A549 (cell line): ENCODE measurements at regions of chr14 and their contacts with region 1.

Region 1: DNA sequence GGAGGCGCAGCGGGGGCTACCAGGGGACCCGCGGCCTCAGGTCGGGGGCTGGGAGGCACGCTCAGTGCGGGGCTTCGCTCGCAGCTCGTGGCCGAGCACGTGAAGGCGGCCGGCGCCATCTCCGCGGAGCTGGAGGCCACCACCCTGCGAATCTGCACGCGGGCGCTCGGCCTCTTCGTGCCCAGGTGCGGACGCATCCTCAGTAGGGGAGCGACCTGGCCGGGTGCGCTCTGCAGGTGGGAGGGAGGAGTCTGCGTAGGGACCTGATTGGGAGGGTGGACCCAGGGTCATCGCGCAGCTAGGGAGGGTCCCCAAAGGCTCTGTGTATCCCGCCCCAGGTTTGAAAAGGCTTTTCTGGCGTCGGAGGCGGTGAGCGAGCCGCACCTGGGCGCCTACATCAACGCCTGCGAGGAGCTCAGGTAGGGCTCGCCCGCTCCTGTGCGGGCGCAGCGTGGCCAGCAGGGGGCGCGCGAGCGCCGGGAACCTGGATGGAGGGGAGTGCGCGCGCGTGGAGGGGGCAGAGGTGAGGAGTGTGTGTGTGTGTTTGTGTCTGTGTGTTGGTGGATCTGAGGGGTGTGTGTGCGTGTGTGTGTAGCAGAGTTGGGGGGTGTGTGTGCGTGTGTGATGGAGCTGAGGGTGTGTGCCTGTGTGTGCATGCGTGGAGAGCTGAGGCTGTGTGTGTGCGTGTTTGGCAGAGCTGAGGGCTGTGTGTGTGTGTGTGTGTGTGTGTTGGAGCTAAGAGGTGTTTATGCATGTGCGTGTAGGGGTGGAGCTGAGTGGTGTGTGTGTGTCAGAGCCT is 10.3 kb downstream of the EXOC3L4 start:
- DNase-seq: peak in 1 of 2 experiments; percentile 81
- ATAC-seq: peak; percentile 37 to 71
- H3K4me3 ChIP-seq: peak overlapping the region; percentile 42
- H3K27ac ChIP-seq: peak overlapping the region; percentile 94
- H3K4me1 ChIP-seq: peaks cover 74% of the 10 kb centered on the region
- CTCF ChIP-seq: peak; percentile 94
- EP300 ChIP-seq: no peak
- POLR2A ChIP-seq: no peak
- RAD21 ChIP-seq: peak; percentile 92 to 98

Region 2: DNA sequence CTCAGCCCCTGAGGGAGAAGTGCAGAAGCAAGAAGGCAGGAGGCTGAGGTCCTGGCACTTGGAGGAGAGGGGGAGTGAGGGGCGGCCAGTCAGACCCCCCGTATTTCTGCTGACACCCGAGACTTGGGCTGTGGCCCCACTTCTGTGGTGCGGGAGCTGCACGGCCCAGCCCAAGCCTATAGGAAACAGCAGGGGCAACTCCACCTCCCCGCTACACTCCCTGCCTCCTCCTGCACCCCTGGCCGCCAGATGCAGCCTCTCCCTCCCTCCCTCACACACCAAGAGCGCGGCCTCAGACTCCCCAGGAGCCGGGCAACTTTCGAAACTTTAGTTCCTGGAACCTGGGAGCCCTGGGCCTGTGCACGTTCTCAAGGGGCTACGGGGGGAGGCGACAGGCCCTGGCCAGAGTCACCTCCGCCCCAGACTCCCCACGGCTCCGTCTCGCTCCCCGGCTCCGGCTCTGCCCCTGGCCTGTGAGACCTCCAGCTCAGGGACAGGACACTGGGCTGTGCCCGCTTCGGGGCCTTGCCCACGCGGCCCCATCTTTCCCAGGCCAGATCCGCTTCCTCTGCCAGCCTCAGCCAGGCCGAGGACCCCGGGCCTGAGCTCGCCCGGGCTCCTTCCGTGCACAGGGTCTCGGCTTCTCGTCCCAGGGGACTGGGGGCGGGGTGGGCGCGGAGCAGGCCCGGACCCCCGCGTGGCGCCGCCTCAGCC is 177.0 kb before region 1 on chr14:
- CTCF ChIA-PET with region 1: no interaction called
- POLR2A ChIA-PET with region 1: no interaction called
- DNase-seq: no peak
- ATAC-seq: peak in 1 of 2 experiments; percentile 3; a peak in 2 of 6 replicates
- H3K4me3 ChIP-seq: no peak overlapping the region
- H3K27ac ChIP-seq: no peak overlapping the region
- H3K4me1 ChIP-seq: peaks cover 4% of the 10 kb centered on the region
- CTCF ChIP-seq: no peak
- EP300 ChIP-seq: no peak
- POLR2A ChIP-seq: no peak
- RAD21 ChIP-seq: no peak

Region 3: DNA sequence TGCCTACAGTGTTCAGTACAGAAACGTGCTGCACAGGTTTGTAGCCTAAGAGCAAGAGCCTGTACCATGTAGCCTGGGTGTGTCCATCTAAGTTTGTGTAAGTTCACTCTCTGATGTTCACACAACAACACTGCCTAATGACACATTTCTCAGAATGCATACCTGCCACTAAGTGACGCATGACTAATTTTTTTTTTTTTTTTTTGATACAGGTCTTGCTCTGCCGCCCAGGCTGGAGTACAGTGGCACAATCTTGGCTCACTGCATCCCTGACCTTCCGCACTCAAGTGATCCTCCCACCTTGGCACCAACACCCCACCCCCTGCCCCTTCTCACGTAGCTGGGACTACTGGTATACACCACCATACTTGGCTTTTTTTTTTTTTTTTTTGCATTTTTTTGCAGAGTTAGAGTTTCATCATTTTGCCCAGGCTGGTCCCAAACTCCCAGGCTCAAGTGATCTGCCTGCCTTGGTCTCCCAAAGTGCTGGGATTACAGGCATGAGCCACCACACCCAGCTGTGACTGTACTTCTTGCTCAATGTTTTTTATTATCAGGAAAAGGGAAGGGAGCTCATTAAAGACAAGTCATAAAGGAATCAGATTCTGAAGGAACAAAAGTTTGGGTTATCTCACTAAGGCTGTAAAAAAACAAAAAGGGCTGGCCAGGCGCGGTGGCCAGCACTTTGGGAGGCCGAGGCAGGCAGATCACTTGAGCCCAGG is 37.5 kb before region 1 on chr14:
- CTCF ChIA-PET with region 1: interaction called, 259 read pairs
- POLR2A ChIA-PET with region 1: no interaction called
- DNase-seq: peak in 1 of 2 experiments; percentile 79
- ATAC-seq: peak; percentile 35 to 49
- H3K4me3 ChIP-seq: no peak overlapping the region
- H3K27ac ChIP-seq: peak overlapping the region; percentile 90 to 97
- H3K4me1 ChIP-seq: peaks cover 72% of the 10 kb centered on the region
- CTCF ChIP-seq: no peak
- EP300 ChIP-seq: peak in 1 of 2 experiments; percentile 20; a peak in 1 of 5 replicates
- POLR2A ChIP-seq: no peak
- RAD21 ChIP-seq: no peak

Region 4: GRCh38 chr14:103121846-103122584 is 17.2 kb after region 1 on chr14:
- CTCF ChIA-PET with region 1: interaction called, 544 read pairs
- POLR2A ChIA-PET with region 1: interaction called, 11 read pairs
- DNase-seq: peak; percentile 83 to 98
- ATAC-seq: peak; percentile 66 to 68
- H3K4me3 ChIP-seq: peak overlapping the region; percentile 83
- H3K27ac ChIP-seq: peak overlapping the region; percentile 96 to 98
- H3K4me1 ChIP-seq: peaks cover 71% of the 10 kb centered on the region
- CTCF ChIP-seq: no peak
- EP300 ChIP-seq: peak; percentile 40 to 78; a peak in 2 of 5 replicates
- POLR2A ChIP-seq: peak; percentile 26
- RAD21 ChIP-seq: peak in 1 of 2 experiments; percentile 48; a peak in 1 of 5 replicates

Region 5: DNA sequence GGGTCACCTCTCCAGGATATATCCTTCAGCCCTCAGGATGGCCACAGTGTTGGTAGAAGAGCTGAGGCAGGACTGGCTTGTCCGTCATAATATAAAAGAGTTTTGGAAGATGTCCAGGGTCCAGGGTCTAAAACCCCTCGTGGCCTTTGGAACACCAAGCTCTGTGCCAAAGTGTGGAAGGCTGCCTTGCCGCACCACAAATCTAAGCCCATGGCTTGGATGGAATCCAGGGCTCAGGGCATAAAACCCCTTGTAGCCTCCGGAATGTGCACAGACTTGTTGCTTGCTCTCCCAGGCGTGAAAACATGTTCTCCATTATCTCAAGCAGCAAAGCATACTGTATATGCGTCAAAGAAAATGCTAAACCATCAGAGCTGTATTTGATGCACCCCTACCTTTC is 65.1 kb after region 1 on chr14:
- CTCF ChIA-PET with region 1: interaction called, 24 read pairs
- POLR2A ChIA-PET with region 1: no interaction called
- DNase-seq: no peak
- ATAC-seq: no peak
- H3K4me3 ChIP-seq: no peak overlapping the region
- H3K27ac ChIP-seq: no peak overlapping the region
- H3K4me1 ChIP-seq: no peaks in the 10 kb centered on the region
- CTCF ChIP-seq: no peak
- EP300 ChIP-seq: no peak
- POLR2A ChIP-seq: no peak
- RAD21 ChIP-seq: no peak

Region 6: DNA sequence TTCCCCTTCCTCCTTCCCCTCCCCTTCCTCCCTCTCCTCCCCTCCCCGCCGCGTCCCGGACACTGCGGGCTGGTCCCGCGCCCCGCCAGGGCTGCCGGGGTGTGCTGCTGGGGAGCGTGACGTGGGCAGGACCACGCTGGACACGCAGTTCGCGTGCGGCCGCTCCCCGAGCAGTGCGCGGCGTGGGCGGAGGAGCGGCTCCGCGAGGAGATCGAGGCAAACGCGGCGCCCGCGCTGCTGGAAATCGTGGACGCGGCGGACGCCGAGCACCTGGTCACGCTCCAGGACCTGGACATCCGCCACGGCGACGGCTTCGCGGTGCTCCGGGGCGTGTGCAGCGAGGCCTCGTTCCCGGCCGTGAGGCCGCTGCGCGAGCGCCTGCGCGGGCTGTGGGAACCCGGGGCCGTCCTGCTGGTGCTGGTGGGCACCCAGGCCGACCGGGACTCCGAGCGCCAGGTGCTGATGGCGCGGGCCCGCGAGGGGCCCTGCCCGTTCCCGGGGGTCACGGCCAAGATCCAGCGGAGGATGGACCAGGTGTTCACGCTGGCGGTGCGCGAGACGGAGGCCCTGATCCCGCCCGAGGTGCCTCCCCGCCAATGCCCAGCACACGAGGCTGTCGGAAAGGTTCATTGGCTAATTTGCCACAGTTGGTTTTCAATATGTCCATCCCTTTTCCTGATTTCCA is 102.7 kb after region 1 on chr14:
- CTCF ChIA-PET with region 1: interaction called, 14 read pairs
- POLR2A ChIA-PET with region 1: no interaction called
- DNase-seq: no peak
- ATAC-seq: no peak
- H3K4me3 ChIP-seq: no peak overlapping the region
- H3K27ac ChIP-seq: peak overlapping the region in 1 of 2 experiments; percentile 56; a peak in 2 of 6 replicates
- H3K4me1 ChIP-seq: peaks cover 17% of the 10 kb centered on the region
- CTCF ChIP-seq: no peak
- EP300 ChIP-seq: no peak
- POLR2A ChIP-seq: no peak
- RAD21 ChIP-seq: no peak

Region 7: DNA sequence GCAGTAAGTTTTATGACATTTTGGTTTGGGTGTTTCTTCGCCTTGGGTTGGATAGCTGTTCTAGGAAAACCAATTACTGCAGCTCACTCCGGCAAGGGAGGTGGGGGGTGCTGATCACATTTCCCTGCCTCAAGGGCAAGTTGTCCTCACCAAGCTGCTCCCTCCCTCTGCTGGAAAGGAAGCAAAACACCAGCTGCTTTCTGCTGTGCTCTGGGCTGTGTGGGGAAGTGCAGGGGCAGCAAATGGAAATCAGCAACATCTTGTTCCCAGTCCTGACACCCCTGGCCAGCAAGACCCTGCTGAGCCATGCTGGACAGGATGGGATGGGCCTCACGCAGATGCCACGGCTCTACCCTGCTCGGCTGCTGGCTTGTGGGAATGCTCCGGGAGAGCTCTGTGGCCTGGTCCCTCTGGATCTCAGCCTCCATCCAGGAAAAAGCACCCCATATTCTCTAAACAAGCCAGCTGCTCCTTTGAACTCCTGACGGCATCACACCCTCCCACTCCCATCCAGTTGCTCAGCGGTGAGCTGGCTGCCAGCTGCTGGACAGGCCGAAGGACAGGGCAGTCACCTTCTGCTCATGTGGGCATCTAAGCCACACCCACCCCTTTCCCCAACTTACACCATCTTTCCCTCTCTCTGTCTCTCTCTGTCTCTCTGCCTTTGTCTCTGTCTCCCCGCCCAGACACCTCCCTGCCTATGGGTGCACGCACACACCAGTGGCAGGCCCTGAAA is 176.8 kb after region 1 on chr14:
- CTCF ChIA-PET with region 1: interaction called, 345 read pairs
- POLR2A ChIA-PET with region 1: no interaction called
- DNase-seq: peak; percentile 62 to 70
- ATAC-seq: peak; percentile 86 to 90; a peak in 5 of 6 replicates
- H3K4me3 ChIP-seq: no peak overlapping the region
- H3K27ac ChIP-seq: peak overlapping the region; percentile 61 to 80
- H3K4me1 ChIP-seq: peaks cover 34% of the 10 kb centered on the region
- CTCF ChIP-seq: peak; percentile 25; the same call in 2 of the 3 replicates
- EP300 ChIP-seq: no peak
- POLR2A ChIP-seq: no peak
- RAD21 ChIP-seq: peak; percentile 60 to 71